ENCODE measurements at regions of chr20 and their contacts with region 1.

Region 1: DNA sequence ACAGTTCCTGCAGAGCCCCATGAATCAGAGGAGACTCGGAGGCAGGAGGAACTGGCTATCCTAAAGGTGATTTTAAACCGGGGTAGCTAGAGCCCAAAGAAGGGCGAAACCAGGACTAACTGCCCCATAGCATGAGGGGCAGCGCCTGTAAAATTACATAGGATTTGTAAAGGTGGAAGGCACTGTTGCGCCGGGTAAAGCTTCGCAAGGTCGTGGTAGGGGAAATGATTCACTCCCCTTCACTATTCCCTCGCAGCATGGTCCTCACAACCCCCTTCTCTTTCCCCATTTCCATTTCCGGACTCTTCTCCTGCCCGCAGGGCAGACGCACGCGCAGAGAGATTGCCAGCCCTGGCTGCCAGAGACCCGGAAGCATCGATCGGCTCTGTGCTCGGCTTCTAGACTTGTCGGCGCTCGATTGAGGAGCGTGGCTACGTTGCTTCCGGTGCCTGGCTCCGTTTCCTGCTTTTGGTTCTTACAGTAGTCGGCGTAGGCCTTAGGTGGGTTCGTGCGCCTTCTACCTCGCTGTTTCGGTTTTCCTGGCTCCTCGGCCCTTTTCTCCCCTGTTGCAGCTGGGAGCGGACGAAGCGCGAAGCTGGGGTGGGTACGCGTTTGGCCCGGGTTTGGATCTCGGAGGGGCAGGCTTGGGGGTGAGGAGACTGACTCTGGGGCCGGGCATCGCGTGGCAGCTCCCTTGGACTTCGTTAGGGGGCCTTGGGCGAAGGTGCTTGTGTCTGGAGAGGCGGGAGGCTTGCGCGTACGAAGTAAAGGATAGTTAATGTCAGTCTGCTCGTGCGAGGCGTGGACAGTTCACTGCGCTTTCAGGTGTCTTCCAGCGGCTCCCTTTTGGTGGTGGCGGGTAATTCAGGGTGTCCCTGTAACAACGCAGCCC is at the start of gene SNRPB2:
- DNase-seq: peak; percentile 95
- ATAC-seq: peak; percentile 100
- total RNA-seq, gene SNRPB2: 34.7 TPM

Region 2: GRCh38 chr20:16573001-16573965 is 156.5 kb before region 1 on chr20 and contains the start of gene KIF16B:
- intact Hi-C with region 1: loop called (anchors 5 kb)
- DNase-seq: peak; percentile 95
- ATAC-seq: peak; percentile 97
- total RNA-seq, gene KIF16B: 18.4 TPM

Measured in Right ventricle myocardium inferior (tissue), 1 donor.